Heart left ventricle (tissue), 16 donors: ENCODE measurements at regions of chr12 and their contacts with region 1.

Region 1: DNA sequence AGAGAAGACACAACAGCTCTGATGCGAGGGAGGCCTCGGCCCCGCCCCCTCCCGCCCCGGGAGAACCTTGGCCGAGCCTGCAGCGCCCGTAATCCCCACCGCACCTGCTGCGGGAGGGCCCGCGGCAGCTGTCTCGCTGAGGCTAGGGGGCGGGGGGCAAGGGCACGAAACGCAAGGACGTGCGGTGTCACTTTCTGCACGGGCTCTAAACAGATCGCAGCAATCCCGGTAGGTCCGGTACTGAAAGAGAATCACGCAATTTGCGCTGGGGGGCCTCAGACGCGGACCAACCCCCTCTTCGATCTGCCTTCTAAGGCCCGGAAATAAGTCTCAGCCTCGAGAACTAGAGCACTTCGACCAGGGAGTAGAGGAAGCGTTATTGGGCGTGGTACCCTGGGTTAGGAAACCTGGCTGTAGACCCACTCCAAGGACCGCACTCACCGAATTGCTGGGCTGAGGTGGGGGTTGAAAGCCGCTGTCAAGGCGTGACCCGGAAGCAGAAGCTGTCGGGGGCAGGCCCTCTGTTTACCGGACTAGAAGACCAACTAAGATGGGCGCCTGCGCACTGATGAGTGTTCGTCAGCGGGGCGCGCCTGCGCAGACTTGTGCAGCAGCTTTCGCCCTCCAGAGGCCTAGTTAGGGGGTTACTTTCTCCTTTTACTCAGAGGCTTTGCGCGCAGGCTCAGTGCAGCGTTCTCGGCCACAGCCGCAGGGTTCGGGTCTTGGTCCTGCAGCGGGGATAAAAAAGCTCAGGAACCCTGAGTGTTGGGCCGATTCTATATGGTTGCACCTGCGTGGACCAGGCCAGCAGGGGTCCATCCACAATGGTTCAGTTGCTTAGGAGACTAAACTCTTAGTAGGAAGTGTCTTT is at the start of gene ASB8:
- DNase-seq: peak; percentile 99 to 100 (median 99)
- ATAC-seq: peak; percentile 97 to 98 (median 98)
- H3K4me3 ChIP-seq: peak within 1 kb of the TSS; percentile 55 to 99 (median 84)
- H3K27ac ChIP-seq: peak within 1 kb of the TSS; percentile 71 to 94 (median 88)
- H3K4me1 ChIP-seq: peaks cover 0 to 51% (median 19%) of the 10 kb centered on the region in 12 donors
- H3K27me3 ChIP-seq: no peaks in the 10 kb centered on the region
- CTCF ChIP-seq: peak; percentile 28 to 77 (median 52)
- POLR2A ChIP-seq: peak in 1 of 2 donors; percentile 66
- total RNA-seq, gene ASB8: 73.2 to 97.6 (median 81.5) TPM

Region 2: DNA sequence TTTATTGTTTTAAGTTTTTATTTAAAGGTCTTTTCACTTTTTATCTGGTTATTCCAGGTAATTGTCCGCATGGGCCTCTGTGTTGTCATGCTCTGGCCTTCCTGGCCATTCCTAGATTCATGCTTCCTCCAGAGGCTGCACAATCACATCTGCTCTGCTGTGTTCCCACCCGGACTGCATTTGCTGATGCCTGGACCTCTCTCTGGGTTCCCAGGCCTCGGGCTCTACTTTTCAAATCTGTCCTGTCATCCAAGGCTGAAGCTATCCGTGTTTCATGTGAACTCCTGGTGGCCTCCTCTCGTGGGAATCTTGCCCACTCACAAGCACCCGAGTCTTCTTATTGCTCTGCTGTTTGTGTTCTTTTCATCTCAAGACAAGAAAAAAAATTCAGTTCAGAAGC is 236.3 kb before region 1 on chr12:
- intact Hi-C with region 1: no loop called
- DNase-seq: no peak
- ATAC-seq: no peak
- H3K4me3 ChIP-seq: no peak overlapping the region
- H3K27ac ChIP-seq: no peak overlapping the region
- H3K4me1 ChIP-seq: no peaks in the 10 kb centered on the region
- H3K27me3 ChIP-seq: peaks cover 0 to 8% (median 0%) of the 10 kb centered on the region in 9 donors
- CTCF ChIP-seq: no peak
- POLR2A ChIP-seq: no peak

Region 3: DNA sequence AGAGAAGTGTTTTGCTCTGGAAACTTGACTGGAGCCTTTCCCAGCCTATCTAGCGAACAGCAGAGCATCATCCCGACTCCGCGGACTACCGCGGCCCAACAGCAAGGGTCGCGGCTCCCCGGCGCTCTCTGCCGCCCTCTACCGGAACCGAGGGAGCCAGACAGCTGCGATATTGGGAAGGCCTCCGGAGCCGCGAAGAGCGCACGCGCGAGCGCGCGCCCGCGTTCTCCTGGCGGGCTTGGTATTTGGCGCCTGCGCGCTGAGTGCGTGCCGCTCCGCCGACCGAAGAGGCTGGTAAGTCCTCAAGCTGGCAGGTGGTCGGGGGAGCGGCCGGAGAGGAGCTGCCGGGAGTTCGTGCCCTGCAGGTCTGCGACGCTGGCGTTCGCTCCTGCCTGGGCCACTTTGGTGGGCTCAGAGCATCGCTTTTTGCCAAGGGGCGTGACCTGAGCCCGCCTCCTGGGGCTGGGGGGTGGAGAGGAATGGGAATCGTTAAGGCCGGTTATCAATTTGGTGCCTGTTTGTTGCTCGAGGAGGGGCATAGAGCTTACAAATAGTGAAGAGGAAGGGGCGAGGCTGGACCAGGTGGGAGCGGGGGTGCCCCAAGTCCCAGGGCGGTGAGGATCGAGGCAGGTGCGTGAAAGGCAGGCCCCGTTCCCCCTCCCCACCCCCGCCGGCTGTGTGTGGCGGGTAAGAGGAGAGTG is 193.8 kb before region 1 on chr12 and contains the start of gene TMEM106C:
- intact Hi-C with region 1: loop called in 5 of 10 experiments (anchors 5 to 10 kb)
- DNase-seq: peak; percentile 89 to 97 (median 92)
- ATAC-seq: peak; percentile 88 to 97 (median 95)
- H3K4me3 ChIP-seq: peak within 1 kb of the TSS; percentile 59 to 91 (median 82)
- H3K27ac ChIP-seq: peak within 1 kb of the TSS in 8 of 12 donors; percentile 14 to 73 (median 56)
- H3K4me1 ChIP-seq: peaks cover 0 to 45% (median 18%) of the 10 kb centered on the region in 12 donors
- H3K27me3 ChIP-seq: no peaks in the 10 kb centered on the region
- CTCF ChIP-seq: peak; percentile 94 to 99 (median 98)
- POLR2A ChIP-seq: no peak
- total RNA-seq, gene TMEM106C: 39.3 to 66.6 (median 50.0) TPM

Region 4: GRCh38 chr12:48105862-48106680 is 51.2 kb before region 1 on chr12 and contains the start of gene SENP1:
- intact Hi-C with region 1: loop called in 9 of 10 experiments (anchors 1 to 5 kb)
- DNase-seq: peak; percentile 91 to 94 (median 91)
- ATAC-seq: peak; percentile 91 to 98 (median 97)
- H3K4me3 ChIP-seq: peak within 1 kb of the TSS; percentile 64 to 98 (median 94)
- H3K27ac ChIP-seq: peak within 1 kb of the TSS; percentile 86 to 100 (median 96)
- H3K4me1 ChIP-seq: peaks cover 0 to 22% (median 16%) of the 10 kb centered on the region in 12 donors
- H3K27me3 ChIP-seq: no peaks in the 10 kb centered on the region
- CTCF ChIP-seq: peak in 7 of 12 donors; percentile 15 to 54 (median 41)
- POLR2A ChIP-seq: peak in 1 of 2 donors; percentile 17
- total RNA-seq, gene SENP1: 6.9 to 13.6 (median 9.2) TPM

Region 5: DNA sequence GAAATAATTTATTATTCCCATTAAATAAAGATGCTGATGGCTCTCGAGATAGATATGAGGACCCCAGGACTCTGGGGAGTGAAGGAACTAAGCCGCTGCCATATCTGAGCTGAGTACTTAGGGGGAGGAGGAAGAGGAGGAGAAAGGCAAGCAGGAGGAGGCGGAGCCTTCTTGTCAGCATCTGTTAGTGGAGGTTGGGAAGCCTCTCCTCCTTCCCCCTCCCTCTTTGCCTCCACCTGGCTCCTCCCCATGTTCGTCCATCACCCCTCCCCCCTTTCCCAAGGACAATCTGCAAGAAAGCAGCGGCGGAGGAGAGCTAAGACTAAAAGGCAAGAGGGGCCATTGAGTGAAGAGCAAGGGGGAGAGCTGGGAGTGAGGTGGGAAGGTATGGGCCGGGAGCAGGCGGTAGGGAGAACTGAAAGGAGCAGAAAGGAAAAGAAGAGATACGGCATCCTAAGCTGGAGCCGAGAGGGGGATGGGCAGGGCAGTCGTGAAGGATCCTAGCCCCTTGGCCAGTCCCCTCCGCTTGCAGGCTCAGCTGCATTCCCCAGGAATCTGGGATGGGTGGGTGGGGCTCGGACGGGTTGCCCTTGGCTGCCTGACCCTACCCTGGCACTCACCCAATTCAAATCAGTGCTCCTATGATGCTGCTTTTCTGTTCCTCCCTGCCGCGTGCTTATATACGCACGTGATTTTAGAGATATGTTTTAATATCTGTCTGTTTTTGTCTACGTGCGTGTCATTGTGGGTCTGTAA is 38.0 kb before region 1 on chr12 and contains the start of gene PFKM:
- intact Hi-C with region 1: loop called in 3 of 10 experiments (anchors 1 to 5 kb)
- DNase-seq: peak; percentile 80 to 92 (median 88)
- ATAC-seq: peak; percentile 95 to 98 (median 97)
- H3K4me3 ChIP-seq: peak within 1 kb of the TSS; percentile 32 to 97 (median 68)
- H3K27ac ChIP-seq: peak within 1 kb of the TSS; percentile 20 to 95 (median 82)
- H3K4me1 ChIP-seq: peaks cover 0 to 31% (median 10%) of the 10 kb centered on the region in 12 donors
- H3K27me3 ChIP-seq: no peaks in the 10 kb centered on the region
- CTCF ChIP-seq: no peak
- POLR2A ChIP-seq: peak in 1 of 2 donors; percentile 56
- total RNA-seq, gene PFKM: 230 to 901 (median 521) TPM

Region 6: DNA sequence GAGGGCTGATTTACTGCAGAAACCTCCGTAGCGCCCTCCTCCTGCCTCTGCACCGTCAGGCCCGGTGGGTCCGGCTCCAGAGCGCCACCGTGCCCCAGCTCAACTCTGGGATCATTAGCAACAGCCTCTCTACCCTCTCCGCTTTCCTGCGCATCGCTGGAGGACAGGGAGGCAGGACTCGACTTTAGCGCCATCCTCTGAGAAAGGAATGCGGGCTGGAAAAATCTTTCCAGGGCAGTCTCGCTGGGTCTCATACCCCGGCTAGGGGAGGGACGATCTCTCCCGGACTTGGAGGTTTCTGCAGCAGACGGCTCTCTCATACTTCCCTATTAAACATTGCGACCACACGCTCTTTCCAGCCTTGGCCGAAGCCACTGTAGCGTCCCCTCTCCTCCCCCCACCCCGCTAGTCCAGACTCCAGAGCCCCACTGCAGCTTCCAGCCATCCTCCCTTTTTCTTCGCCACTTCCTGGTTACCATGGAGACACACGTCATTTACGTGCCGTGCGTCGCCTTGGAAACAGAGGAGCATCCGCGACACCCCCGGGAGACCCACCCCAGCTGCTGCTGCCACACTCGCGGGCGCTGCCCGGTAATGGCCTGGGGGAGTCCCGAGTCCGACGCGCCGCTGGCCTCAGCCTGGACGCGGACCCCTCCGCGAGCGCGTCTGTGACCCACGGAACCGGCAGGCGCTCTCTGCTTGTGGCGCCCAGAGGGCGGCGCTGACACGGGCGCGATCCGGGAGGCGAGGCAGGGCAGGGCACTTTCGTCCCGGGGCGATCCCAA is 26.0 kb after region 1 on chr12 and contains the start of gene CCDC184:
- intact Hi-C with region 1: loop called in 1 of 10 experiments (anchors 2 kb)
- DNase-seq: peak; percentile 62 to 79 (median 76)
- ATAC-seq: peak; percentile 54 to 82 (median 80)
- H3K4me3 ChIP-seq: peak within 1 kb of the TSS; percentile 49 to 89 (median 70)
- H3K27ac ChIP-seq: peak within 1 kb of the TSS in 9 of 12 donors; percentile 1 to 72 (median 54)
- H3K4me1 ChIP-seq: peaks cover 0 to 28% (median 16%) of the 10 kb centered on the region in 12 donors
- H3K27me3 ChIP-seq: peaks cover 17 to 54% (median 31%) of the 10 kb centered on the region in 9 donors
- CTCF ChIP-seq: peak in 8 of 12 donors; percentile 7 to 65 (median 36)
- POLR2A ChIP-seq: peak in 1 of 2 donors; percentile 27
- total RNA-seq, gene CCDC184: 0.25 to 1.5 (median 0.54) TPM

Region 7: GRCh38 chr12:48197971-48198671 is 40.9 kb after region 1 on chr12:
- intact Hi-C with region 1: loop called in 1 of 10 experiments (anchors 5 kb)
- DNase-seq: peak; percentile 98 to 99 (median 99)
- ATAC-seq: peak; percentile 98 to 100 (median 99)
- H3K4me3 ChIP-seq: peak overlapping the region; percentile 60 to 92 (median 78)
- H3K27ac ChIP-seq: peak overlapping the region; percentile 89 to 100 (median 98)
- H3K4me1 ChIP-seq: peaks cover 0 to 38% (median 16%) of the 10 kb centered on the region in 12 donors
- H3K27me3 ChIP-seq: no peaks in the 10 kb centered on the region
- CTCF ChIP-seq: no peak
- POLR2A ChIP-seq: peak; percentile 61 to 99